ENCODE measurements at regions of chr10 and their contacts with region 1.

Region 1: GRCh38 chr10:80154975-80155695 is 22.6 kb downstream of the PLAC9 start:
- DNase-seq: no peak
- H3K4me3 ChIP-seq: no peak overlapping the region
- H3K27ac ChIP-seq: peak overlapping the region; percentile 52 to 92 (median 80)
- H3K4me1 ChIP-seq: peaks cover 15 to 58% (median 47%) of the 10 kb centered on the region in 3 donors
- H3K27me3 ChIP-seq: no peaks in the 10 kb centered on the region
- CTCF ChIP-seq: no peak
- POLR2A ChIP-seq: no peak

Region 2: GRCh38 chr10:80211786-80212185 is 56.7 kb after region 1 on chr10:
- intact Hi-C with region 1: loop called (anchors 5 kb)
- DNase-seq: no peak
- H3K4me3 ChIP-seq: no peak overlapping the region
- H3K27ac ChIP-seq: no peak overlapping the region
- H3K4me1 ChIP-seq: peaks cover 2 to 22% (median 10%) of the 10 kb centered on the region in 3 donors
- H3K27me3 ChIP-seq: no peaks in the 10 kb centered on the region
- CTCF ChIP-seq: no peak
- POLR2A ChIP-seq: no peak

Region 3: DNA sequence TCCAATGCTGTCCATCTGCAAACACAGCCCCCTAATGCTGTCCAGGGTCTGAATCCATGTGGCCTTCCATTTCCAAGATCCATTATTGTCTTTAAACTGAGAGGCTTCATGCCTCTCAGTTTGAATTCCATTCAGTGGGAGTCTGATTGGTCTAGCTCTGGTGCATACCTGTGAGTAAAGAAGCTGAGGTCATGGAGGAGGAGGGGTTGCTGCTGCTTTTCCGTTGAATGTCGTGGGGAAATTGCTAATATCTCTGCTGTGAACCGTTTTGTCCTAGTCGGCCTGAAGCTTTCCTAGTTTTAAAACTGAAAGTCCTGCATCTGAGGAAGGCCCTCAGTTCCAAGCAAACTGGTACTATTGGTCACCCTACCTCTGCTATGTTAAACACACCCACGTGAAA is 400.3 kb after region 1 on chr10:
- intact Hi-C with region 1: no loop called
- DNase-seq: no peak
- H3K4me3 ChIP-seq: no peak overlapping the region
- H3K27ac ChIP-seq: no peak overlapping the region
- H3K4me1 ChIP-seq: no peaks in the 10 kb centered on the region
- H3K27me3 ChIP-seq: no peaks in the 10 kb centered on the region
- CTCF ChIP-seq: no peak
- POLR2A ChIP-seq: no peak